Adrenal gland (tissue), 19 donors: ENCODE measurements at regions of chr15 and their contacts with region 1.

Region 1: GRCh38 chr15:88610701-88611231 is 10.4 kb upstream of the AEN start:
- DNase-seq: no peak
- H3K4me3 ChIP-seq: no peak overlapping the region
- H3K27ac ChIP-seq: no peak overlapping the region
- H3K4me1 ChIP-seq: peaks cover 0 to 5% of the 10 kb centered on the region in 2 donors
- H3K27me3 ChIP-seq: peaks cover 13% of the 10 kb centered on the region
- CTCF ChIP-seq: no peak
- POLR2A ChIP-seq: no peak

Region 2: DNA sequence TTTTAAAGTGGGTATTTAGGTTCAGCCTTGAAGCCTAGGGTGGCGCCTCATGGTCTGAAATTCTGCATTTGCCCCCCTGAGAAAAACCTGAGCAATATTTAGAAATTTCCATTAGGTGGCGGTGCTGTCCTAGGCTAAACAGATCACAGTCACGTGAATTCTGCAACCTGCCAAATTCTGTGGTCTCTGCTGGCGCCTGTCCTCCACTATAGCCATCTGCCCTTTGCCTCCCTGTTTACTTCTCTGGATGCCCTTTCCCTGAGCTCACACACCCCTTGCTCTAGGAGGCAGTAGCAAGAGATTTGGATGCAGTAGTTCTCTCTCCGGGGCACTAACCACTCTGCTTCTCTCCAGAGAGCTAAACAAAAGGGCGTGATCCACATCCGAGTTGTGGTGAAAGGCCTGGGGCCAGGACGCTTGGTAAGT is 134.1 kb before region 1 on chr15:
- intact Hi-C with region 1: loop called (anchors 5 kb)
- DNase-seq: peak; percentile 43 to 80 (median 62)
- H3K4me3 ChIP-seq: no peak overlapping the region
- H3K27ac ChIP-seq: no peak overlapping the region
- H3K4me1 ChIP-seq: peaks cover 0 to 4% of the 10 kb centered on the region in 2 donors
- H3K27me3 ChIP-seq: no peaks in the 10 kb centered on the region
- CTCF ChIP-seq: peak; percentile 31 to 79 (median 74)
- POLR2A ChIP-seq: no peak

Region 3: DNA sequence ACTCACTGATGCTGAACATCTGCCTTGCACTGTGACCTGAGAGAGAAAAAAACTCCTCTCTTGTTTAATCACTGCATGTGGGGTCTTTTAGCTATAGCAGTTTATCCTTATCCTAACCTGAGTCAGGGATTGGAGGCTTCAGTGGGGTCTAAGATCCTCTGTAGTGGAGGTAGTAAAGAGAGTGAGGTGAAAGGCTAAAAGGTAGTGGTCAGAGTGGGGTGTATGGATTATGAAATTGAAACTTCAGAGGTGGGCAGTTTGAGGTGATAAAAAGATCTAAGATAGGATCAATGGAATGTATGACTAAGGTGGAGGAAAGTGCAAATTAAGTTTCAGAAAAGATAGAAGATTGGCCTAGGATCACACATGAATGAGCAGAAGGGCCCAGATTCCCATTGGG is 100.8 kb before region 1 on chr15:
- intact Hi-C with region 1: loop called in 1 of 2 experiments (anchors 10 kb)
- DNase-seq: no peak
- H3K4me3 ChIP-seq: no peak overlapping the region
- H3K27ac ChIP-seq: no peak overlapping the region
- H3K4me1 ChIP-seq: peaks cover 0 to 7% of the 10 kb centered on the region in 2 donors
- H3K27me3 ChIP-seq: no peaks in the 10 kb centered on the region
- CTCF ChIP-seq: no peak
- POLR2A ChIP-seq: no peak

Region 4: DNA sequence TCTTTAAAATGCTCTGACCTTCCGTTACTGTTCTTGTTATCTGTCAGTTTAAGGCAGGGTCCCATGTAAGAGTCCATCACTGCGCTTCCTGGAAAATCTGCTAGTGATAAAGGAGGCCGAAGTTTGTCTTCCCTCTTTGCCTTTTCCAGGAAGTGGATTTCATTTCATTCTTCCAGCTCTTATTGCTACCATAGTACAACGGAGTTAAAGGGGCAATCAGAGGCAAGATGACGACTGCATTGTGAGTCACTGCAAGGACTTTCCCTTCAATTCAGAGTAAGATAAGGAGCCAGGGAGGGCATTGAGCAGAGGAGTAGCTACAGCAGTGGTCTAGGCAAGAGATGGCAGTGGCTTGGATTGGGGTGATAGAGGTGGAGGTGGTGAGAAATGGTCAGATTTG is 47.1 kb before region 1 on chr15:
- intact Hi-C with region 1: loop called in 1 of 2 experiments (anchors 10 kb)
- DNase-seq: peak in 2 of 7 donors; percentile 31 to 33
- H3K4me3 ChIP-seq: no peak overlapping the region
- H3K27ac ChIP-seq: no peak overlapping the region
- H3K4me1 ChIP-seq: no peaks in the 10 kb centered on the region
- H3K27me3 ChIP-seq: no peaks in the 10 kb centered on the region
- CTCF ChIP-seq: no peak
- POLR2A ChIP-seq: no peak

Region 5: GRCh38 chr15:88580532-88580931 is 30.2 kb before region 1 on chr15:
- intact Hi-C with region 1: no loop called
- DNase-seq: peak in 1 of 7 donors; percentile 64
- H3K4me3 ChIP-seq: no peak overlapping the region
- H3K27ac ChIP-seq: no peak overlapping the region
- H3K4me1 ChIP-seq: no peaks in the 10 kb centered on the region
- H3K27me3 ChIP-seq: no peaks in the 10 kb centered on the region
- CTCF ChIP-seq: no peak
- POLR2A ChIP-seq: no peak

Region 6: GRCh38 chr15:88657326-88658069 is 46.7 kb after region 1 on chr15:
- intact Hi-C with region 1: no loop called
- DNase-seq: peak in 3 of 7 donors; percentile 45 to 63 (median 58)
- H3K4me3 ChIP-seq: no peak overlapping the region
- H3K27ac ChIP-seq: no peak overlapping the region
- H3K4me1 ChIP-seq: no peaks in the 10 kb centered on the region
- H3K27me3 ChIP-seq: no peaks in the 10 kb centered on the region
- CTCF ChIP-seq: peak; percentile 75 to 82 (median 79)
- POLR2A ChIP-seq: no peak